ENCODE measurements at regions of chr3 and their contacts with region 1.

Region 1: DNA sequence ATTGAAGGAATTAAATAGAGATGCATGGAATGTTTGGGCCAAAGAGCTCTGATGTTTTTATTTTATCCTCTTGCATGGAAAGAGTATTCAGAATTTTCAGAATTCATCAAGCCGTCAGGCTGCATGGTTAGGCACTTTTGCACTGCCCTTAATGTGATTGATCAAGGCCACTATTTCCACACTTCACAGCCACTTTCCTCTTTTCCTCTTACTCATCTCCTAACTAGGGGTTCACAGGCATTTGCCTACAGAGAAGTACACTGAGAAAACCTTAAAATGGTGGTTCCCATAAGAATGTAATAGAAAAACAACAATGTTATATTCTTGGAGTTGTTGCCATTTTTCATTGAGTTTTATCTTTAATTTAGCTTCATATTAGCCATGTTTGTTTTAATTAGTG is 10.9 kb downstream of the SLC35A5 start:
- H3K4me3 Mint-ChIP-seq: no peak overlapping the region
- H3K27ac Mint-ChIP-seq: peak overlapping the region; percentile 57
- H3K4me1 Mint-ChIP-seq: peaks cover 19% of the 10 kb centered on the region
- H3K27me3 Mint-ChIP-seq: no peaks in the 10 kb centered on the region

Region 2: DNA sequence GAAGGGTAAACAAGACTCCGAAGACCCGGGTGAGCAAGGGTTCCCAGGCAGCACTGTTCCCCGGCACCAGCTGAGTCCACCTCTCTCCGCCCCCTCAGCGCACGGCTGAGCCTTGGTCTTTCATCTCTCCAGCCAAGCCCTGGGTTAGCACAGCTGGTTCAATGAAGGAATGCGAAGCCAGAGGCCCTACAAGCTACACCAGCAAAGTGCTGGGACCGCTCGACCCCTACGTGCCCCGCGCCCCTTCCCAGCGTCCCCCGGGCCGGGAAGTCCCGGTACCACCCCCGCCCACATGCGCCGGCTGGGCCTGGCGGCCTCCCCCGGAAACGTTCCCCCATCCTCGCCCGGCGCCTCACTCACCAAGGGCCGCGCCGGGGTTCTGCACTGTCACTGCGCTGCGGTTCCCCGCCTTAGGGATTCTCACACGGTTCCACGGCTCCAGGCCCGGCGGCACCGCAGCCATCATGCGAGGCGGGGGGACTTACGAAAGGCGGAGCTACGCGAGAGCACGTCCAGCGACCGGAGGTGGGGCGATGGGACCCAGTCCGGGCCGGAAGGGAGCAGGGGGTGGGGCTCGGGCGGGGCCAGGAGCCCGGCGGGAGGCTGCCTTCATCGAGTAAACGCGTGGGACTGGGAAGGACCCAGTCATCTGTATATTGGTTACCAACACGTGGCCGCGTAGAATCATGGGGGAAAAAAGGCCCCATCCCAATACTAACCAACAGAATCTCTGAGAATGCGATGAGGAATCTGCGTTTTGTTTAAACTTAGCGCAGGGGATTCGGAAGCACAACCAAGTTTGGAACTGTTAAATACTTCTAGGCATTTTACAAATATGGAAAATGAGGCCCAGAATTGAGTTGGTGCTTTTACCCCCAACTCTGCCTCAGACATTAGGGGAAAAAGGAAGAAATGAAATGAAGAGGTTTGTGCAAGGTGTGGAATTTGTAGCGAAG is 446.8 kb after region 1 on chr3:
- intact Hi-C with region 1: loop called (anchors 5 kb)
- H3K4me3 Mint-ChIP-seq: peak overlapping the region; percentile 94
- H3K27ac Mint-ChIP-seq: peak overlapping the region; percentile 94
- H3K4me1 Mint-ChIP-seq: peaks cover 45% of the 10 kb centered on the region
- H3K27me3 Mint-ChIP-seq: no peaks in the 10 kb centered on the region